Activated naive CD4-positive, alpha-beta T cell treated with anti-CD3 and anti-CD28 coated beads for 36 hours (primary cell): ENCODE measurements at regions of chr10 and their contacts with region 1.

Region 1: GRCh38 chr10:70348228-70348850 is 34.1 kb downstream of the LRRC20 start:
- DNase-seq: peak; percentile 60
- H3K4me3 Mint-ChIP-seq: no peak overlapping the region
- H3K27ac Mint-ChIP-seq: no peak overlapping the region
- H3K4me1 Mint-ChIP-seq: no peaks in the 10 kb centered on the region
- H3K27me3 Mint-ChIP-seq: no peaks in the 10 kb centered on the region

Region 2: DNA sequence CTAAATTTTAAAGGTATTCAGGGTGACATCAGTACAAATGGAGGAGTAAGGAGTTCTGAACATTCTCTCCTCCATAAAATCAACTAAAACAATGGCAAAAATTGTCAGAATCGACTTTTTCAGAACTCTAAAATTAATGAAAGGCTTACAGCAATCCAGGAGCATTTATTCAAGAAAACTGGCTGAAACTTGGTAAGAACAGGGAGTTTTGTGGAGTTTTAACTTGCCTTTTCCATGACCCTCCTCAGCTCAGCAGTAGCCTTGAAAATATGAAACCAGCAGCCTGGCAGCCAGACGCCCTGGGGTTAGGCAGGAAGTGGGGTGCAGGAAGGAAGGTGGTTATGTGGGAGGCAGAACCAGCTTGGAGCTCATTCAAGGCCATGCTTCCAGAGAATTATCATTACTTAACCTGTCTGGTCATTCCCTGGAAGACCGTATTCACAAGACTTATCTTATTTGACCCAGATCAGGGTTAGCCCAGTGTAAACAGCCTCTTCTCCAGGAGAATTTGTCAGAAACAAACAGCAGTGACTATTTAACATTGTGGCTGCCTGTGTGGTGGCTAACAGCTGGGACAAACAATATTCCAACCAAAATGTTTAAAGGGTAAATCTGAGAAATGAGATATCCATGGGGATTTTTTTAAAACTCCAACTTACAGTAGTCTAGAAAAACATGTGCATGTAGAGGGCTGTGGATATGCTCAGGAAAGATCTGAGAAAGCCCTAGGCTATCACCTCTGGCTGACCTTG is 371.4 kb before region 1 on chr10:
- CTCF ChIA-PET with region 1: no interaction called
- intact Hi-C with region 1: no loop called
- DNase-seq: no peak
- H3K4me3 Mint-ChIP-seq: no peak overlapping the region
- H3K27ac Mint-ChIP-seq: no peak overlapping the region
- H3K4me1 Mint-ChIP-seq: no peaks in the 10 kb centered on the region
- H3K27me3 Mint-ChIP-seq: peaks cover 30% of the 10 kb centered on the region

Region 3: DNA sequence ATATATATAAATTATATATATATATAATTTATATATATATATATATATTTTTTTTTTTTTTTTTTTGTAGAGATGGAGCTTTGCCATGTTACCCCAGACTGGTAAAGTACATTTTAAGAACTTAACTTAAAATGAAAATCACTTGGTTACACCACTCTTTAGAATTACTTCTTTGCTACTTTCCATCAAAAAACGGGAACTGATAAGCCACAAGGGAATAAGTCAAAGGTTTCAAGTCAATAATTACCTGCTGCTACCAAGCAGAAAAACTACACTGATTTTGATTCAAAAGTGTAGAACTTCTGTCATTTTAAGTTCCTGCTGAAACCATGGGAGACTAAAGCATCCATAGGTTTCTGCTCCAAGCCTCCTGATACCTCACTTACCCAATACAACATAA is 127.3 kb before region 1 on chr10:
- CTCF ChIA-PET with region 1: interaction called, 17 read pairs
- intact Hi-C with region 1: loop called (anchors 1 kb)
- DNase-seq: no peak
- H3K4me3 Mint-ChIP-seq: no peak overlapping the region
- H3K27ac Mint-ChIP-seq: peak overlapping the region; percentile 82
- H3K4me1 Mint-ChIP-seq: peaks cover 34% of the 10 kb centered on the region
- H3K27me3 Mint-ChIP-seq: no peaks in the 10 kb centered on the region